ENCODE measurements at regions of chr4 and their contacts with region 1.

Region 1: GRCh38 chr4:168183717-168184608 is 91.6 kb downstream of the ANXA10 start:
- DNase-seq: no peak

Region 2: DNA sequence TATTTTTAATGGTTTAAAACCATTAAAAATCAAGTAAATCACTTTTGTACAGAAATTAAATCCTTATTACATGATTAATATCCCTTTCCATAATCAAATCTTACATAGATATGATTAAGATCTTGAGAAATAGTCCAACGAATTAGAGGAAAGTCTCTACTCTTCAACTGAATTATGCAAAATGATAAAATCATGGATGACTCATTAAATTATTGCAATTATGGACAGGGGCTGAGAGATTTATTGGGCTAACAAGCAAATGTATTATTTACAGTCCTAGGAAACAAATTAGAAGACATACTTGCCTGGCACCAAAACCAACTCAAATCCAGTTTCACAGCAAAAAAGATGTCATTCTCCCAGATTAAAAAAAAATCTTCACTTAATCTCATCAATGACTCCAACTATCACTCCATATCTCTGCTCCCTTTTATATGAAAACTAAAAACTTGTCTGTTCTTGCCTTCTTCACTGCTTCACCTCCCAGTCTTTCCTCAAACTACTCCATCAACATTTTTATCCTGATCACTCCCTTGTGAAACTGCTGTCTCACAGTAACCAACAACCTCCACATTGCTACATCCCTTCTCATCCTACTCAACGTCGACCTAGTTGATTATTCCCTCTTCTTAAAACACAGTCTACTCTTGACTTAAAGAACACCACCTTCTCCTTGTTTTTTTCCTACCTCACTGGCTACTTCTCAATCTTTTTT is 153.0 kb after region 1 on chr4:
- CTCF ChIA-PET with region 1: interaction called, 13 read pairs
- POLR2A ChIA-PET with region 1: no interaction called
- DNase-seq: no peak